ENCODE measurements at regions of chr9 and their contacts with region 1.

Region 1: DNA sequence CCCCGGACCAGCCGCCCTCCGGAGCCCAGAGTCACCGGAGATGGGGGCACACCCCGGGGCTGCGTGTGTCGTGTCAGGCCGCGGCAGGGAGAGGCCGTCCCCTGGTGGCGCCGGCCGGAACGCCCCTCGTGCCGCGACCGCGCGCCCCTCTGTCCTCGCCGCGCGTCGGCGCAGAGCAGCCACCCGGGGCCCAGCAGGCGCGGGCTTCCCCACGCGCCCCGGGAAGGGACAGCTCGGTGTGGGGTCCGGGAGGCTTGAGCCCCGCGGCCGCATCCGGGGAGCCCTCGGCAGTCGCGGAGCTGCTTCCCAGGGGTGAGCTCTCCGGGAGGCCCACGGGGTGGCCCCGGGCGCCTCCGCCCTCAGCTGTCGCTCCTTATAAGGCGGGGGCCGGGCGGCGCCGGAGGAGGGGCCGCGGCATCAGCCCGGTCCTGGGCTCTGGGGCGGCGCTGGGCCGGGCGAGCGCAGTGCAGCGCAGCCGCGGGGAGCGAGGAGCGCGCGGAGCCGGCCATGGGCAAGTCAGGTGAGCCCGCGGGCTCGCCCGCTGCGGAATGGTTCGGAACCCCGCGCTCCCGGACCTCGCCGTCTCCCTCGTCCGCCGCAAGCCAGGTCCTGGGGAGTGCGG is at the start of gene GLIPR2:
- DNase-seq: peak; percentile 77
- H3K4me3 Mint-ChIP-seq: peak within 1 kb of the TSS; percentile 96
- H3K27ac Mint-ChIP-seq: peak within 1 kb of the TSS; percentile 72
- H3K4me1 Mint-ChIP-seq: peaks cover 43% of the 10 kb centered on the region
- H3K27me3 Mint-ChIP-seq: peaks cover 12% of the 10 kb centered on the region
- total RNA-seq, gene GLIPR2: 28.8 and 30.1 TPM in 2 replicates

Region 2: DNA sequence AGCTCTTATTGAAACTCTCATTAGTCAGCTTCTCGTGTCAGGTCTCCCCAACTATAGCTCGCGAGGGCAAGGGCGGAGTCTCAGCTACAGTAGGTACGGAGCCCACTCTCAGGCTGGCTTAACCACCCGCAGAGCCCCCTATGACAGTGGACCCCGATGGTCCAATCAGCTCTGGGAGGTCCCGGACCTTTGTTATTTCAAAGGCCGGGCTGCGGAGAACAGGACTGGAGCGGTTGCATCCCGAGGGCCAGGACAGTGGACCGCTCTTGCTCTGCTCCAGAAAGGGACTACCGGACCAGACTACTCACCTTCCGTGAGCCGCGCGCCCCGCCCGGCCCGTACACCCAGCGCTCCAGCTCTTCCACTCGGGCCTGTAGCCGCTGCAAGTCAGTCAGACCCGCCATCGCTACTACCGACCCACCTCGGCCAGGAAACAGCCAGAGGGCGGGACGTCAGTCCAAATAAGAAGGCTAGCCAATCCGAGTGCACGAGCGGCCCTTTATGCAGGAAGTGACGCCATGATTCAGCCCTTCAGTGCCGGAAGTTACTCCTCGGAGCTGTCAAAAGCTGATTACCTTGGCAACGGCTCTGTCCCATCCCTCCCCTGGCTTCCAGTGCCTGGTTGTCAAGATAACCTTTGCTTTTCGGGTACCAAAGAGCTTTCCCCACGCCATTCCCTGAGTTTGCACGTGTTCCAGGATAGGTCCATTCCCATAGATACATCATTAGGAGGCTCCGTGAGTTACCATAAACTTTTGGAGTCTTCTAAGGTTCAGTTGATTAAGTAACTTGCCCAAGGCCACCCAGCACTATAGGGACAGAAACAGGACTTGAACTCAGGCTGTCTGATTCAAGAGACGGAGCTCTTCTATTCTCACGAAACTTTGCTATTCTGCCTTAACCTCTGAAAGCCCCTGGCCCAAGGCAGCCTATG is 1516.1 kb before region 1 on chr9 and contains the start of gene DCTN3:
- intact Hi-C with region 1: no loop called
- DNase-seq: peak; percentile 90
- H3K4me3 Mint-ChIP-seq: peak within 1 kb of the TSS; percentile 91
- H3K27ac Mint-ChIP-seq: peak within 1 kb of the TSS; percentile 46
- H3K4me1 Mint-ChIP-seq: peaks cover 16% of the 10 kb centered on the region
- H3K27me3 Mint-ChIP-seq: peaks cover 26% of the 10 kb centered on the region
- total RNA-seq, gene DCTN3: 57.8 and 65.5 TPM in 2 replicates

Region 3: GRCh38 chr9:36151316-36152210 is 15.2 kb after region 1 on chr9:
- intact Hi-C with region 1: loop called (anchors 1 kb)
- DNase-seq: peak; percentile 83
- H3K4me3 Mint-ChIP-seq: peak overlapping the region; percentile 71
- H3K27ac Mint-ChIP-seq: peak overlapping the region; percentile 90
- H3K4me1 Mint-ChIP-seq: peaks cover 59% of the 10 kb centered on the region
- H3K27me3 Mint-ChIP-seq: no peaks in the 10 kb centered on the region

Region 4: GRCh38 chr9:36166101-36166927 is 29.9 kb after region 1 on chr9:
- intact Hi-C with region 1: loop called (anchors 5 kb)
- DNase-seq: peak; percentile 81
- H3K4me3 Mint-ChIP-seq: peak overlapping the region; percentile 72
- H3K27ac Mint-ChIP-seq: no peak overlapping the region
- H3K4me1 Mint-ChIP-seq: peaks cover 5% of the 10 kb centered on the region
- H3K27me3 Mint-ChIP-seq: peaks cover 7% of the 10 kb centered on the region

Measured in activated T-helper 2 cell treated with anti-CD3 and anti-CD28 coated beads, Interferon-gamma antibody, Interleukin-2, Interleukin-4, amounts not matched to agents 10 μg/mL and 5 μg/mL and 100 μg/mL, durations not matched to agents 14 hours and 24 hours and 36 hours (primary cell).